Activated CD4-positive, alpha-beta T cell treated with anti-CD3 and anti-CD28 coated beads for 36 hours (primary cell): ENCODE measurements at regions of chr7 and their contacts with region 1.

Region 1: DNA sequence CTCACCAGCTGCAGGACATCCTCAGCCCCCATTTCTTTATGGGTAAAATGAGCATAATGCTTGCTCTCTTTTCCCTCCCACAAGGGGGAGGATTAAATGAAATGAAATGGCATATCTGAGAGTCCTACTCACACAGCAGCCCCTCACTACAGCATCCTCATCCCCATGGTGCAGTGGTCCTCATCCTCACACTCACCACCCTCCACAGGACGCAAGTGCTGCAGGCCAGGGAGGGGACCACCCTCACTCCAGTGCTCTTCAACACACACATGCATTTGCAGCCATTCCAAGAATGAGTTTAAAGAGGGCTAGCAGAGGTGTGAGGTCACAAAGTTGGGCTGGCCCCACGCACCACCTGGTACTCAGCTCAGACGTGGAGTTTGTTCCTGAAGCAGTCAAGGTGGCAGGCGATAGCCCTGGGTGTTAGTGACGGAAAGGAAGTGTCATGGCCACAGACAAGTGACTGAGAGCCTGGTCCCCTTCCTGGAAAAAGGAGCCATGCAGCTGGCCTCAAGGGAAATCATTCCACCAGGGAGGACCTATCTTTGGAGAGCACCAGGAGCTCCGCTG is 234.0 kb downstream of the TNS3 start:
- DNase-seq: no peak
- ATAC-seq: no peak
- H3K4me3 Mint-ChIP-seq: no peak overlapping the region
- H3K27ac Mint-ChIP-seq: no peak overlapping the region
- H3K4me1 Mint-ChIP-seq: no peaks in the 10 kb centered on the region
- H3K27me3 Mint-ChIP-seq: no peaks in the 10 kb centered on the region

Region 2: GRCh38 chr7:47392231-47392759 is 44.4 kb after region 1 on chr7:
- CTCF ChIA-PET with region 1: no interaction called
- POLR2A ChIA-PET with region 1: no interaction called
- intact Hi-C with region 1: loop called in 1 of 2 experiments (anchors 1 kb)
- DNase-seq: no peak
- ATAC-seq: no peak
- H3K4me3 Mint-ChIP-seq: no peak overlapping the region
- H3K27ac Mint-ChIP-seq: no peak overlapping the region
- H3K4me1 Mint-ChIP-seq: no peaks in the 10 kb centered on the region
- H3K27me3 Mint-ChIP-seq: peaks cover 6% of the 10 kb centered on the region